ENCODE measurements at regions of chr13 and their contacts with region 1.

Region 1: GRCh38 chr13:111046590-111047141 is 68.4 kb upstream of the ARHGEF7 start:
- DNase-seq: peak; percentile 76
- CTCF ChIP-seq: peak; percentile 26

Region 2: DNA sequence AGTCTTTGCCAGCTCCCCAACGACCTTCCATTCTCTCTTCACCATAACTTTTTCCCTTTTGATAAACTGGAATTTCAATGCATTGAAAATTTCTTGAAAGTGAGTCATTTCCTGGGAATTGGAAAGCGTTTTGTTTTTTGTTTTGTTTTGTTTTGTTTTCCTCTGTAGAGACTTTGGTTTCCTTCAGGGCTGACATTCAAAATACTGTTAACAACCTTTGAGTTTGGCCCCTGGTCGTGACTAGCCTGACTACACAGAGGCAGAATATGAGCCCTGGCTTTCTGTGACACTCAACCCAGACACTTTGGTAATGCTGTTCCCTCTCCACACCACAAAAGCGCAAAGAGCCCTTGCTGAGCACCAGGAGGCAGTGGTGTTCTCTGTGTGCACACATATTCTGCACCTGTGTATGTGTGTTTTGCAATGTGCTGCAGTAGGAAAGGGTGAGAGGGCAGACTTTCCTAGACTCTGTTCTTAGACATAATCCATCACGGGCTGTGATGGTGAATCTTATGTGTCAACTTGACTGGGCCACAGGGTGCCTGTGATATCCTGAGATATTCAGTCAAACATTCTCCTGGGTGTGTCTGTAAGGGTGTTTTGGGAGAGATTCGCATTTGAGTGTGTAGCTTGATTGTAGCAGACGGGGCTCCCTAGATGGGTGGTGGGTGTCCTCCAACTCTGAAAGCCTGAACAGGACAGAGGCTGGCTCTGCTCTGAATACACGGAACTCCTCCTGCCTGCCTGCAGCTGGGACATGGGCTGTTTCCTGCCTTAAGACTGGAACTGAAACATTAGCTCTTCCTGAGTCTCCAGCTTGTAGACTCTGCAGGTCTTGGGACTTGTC is 102.3 kb before region 1 on chr13:
- CTCF ChIA-PET with region 1: interaction called, 11 read pairs
- POLR2A ChIA-PET with region 1: no interaction called
- DNase-seq: peak; percentile 62
- CTCF ChIP-seq: peak; percentile 61

Region 3: GRCh38 chr13:111058776-111059506 is 12.3 kb after region 1 on chr13:
- CTCF ChIA-PET with region 1: interaction called, 11 read pairs
- POLR2A ChIA-PET with region 1: no interaction called
- DNase-seq: no peak
- CTCF ChIP-seq: no peak